Mammary epithelial cell (primary cell): ENCODE measurements at regions of chr1 and their contacts with region 1.

Region 1: GRCh38 chr1:232630047-232630893 is at the start of gene SIPA1L2:
- DNase-seq: peak; percentile 88
- H3K4me3 ChIP-seq: peak within 1 kb of the TSS; percentile 64 to 83 (median 77)
- H3K27ac ChIP-seq: no peak within 1 kb of the TSS
- H3K4me1 ChIP-seq: peaks cover 16% of the 10 kb centered on the region
- H3K27me3 ChIP-seq: no peaks in the 10 kb centered on the region
- CTCF ChIP-seq: peak; percentile 37 to 74
- total RNA-seq, gene SIPA1L2: 3.8 to 19.8 TPM

Region 2: GRCh38 chr1:231757101-231757404 is 873.2 kb before region 1 on chr1:
- CTCF ChIA-PET with region 1: interaction called, 9 read pairs
- dilution Hi-C with region 1: no loop called
- in situ Hi-C with region 1: no loop called
- intact Hi-C with region 1: loop called (anchors 1 kb)
- DNase-seq: no peak
- H3K4me3 ChIP-seq: no peak overlapping the region
- H3K27ac ChIP-seq: no peak overlapping the region
- H3K4me1 ChIP-seq: no peaks in the 10 kb centered on the region
- H3K27me3 ChIP-seq: peaks cover 2% of the 10 kb centered on the region
- CTCF ChIP-seq: no peak

Region 3: GRCh38 chr1:231872461-231872910 is 757.8 kb before region 1 on chr1:
- CTCF ChIA-PET with region 1: interaction called, 7 read pairs
- dilution Hi-C with region 1: no loop called
- in situ Hi-C with region 1: loop called (anchors 5 to 10 kb)
- intact Hi-C with region 1: no loop called
- DNase-seq: no peak
- H3K4me3 ChIP-seq: no peak overlapping the region
- H3K27ac ChIP-seq: no peak overlapping the region
- H3K4me1 ChIP-seq: no peaks in the 10 kb centered on the region
- H3K27me3 ChIP-seq: no peaks in the 10 kb centered on the region
- CTCF ChIP-seq: no peak

Region 4: DNA sequence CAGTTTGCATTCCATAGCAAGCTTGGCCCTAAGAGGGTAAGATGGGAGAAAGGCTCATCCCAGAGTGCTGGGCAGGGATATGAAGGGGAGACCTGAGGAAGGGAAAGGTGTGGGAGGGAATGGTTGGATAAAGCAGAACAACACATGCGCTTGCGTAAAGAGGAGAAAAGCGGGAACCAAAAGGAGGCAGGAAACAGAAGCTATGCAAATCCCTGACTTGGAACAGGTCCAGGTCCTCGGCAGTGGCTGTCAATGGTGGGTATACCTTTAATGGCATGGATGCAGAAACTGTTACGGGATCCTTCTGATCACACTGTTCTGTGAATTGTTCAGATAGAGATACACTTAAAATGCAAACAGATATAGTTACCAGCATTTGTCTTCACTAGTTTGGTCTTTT is 456.0 kb before region 1 on chr1:
- CTCF ChIA-PET with region 1: no interaction called
- dilution Hi-C with region 1: no loop called
- in situ Hi-C with region 1: loop called in 1 of 2 experiments (anchors 10 kb)
- intact Hi-C with region 1: no loop called
- DNase-seq: no peak
- H3K4me3 ChIP-seq: no peak overlapping the region
- H3K27ac ChIP-seq: no peak overlapping the region
- H3K4me1 ChIP-seq: no peaks in the 10 kb centered on the region
- H3K27me3 ChIP-seq: no peaks in the 10 kb centered on the region
- CTCF ChIP-seq: no peak

Region 5: DNA sequence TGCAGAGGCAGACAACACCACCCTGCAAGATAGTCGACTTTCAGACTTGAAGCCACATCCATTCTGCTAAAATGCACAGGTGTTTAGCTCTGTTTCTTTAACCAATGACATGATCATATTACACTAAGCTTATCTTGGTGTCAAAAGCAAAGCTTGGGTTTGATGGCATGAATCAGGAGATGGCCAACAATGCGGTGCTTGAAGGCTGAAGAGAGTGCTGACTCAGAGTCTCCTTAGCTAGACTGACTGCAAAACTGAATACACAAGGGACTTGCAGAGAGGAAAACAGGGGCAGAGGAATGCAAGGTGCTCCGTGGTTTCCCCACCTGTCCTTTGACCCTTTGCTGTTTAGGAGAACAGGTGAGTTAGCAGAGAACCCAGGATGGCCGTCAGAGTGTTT is 263.0 kb before region 1 on chr1:
- CTCF ChIA-PET with region 1: no interaction called
- dilution Hi-C with region 1: no loop called
- in situ Hi-C with region 1: no loop called
- intact Hi-C with region 1: no loop called
- DNase-seq: no peak
- H3K4me3 ChIP-seq: no peak overlapping the region
- H3K27ac ChIP-seq: no peak overlapping the region
- H3K4me1 ChIP-seq: no peaks in the 10 kb centered on the region
- H3K27me3 ChIP-seq: no peaks in the 10 kb centered on the region
- CTCF ChIP-seq: no peak

Region 6: GRCh38 chr1:232528472-232529089 is 101.7 kb before region 1 on chr1:
- CTCF ChIA-PET with region 1: interaction called, 3 read pairs
- dilution Hi-C with region 1: no loop called
- in situ Hi-C with region 1: no loop called
- intact Hi-C with region 1: loop called (anchors 1 kb)
- DNase-seq: no peak
- H3K4me3 ChIP-seq: no peak overlapping the region
- H3K27ac ChIP-seq: no peak overlapping the region
- H3K4me1 ChIP-seq: peaks cover 12% of the 10 kb centered on the region
- H3K27me3 ChIP-seq: no peaks in the 10 kb centered on the region
- CTCF ChIP-seq: no peak

Region 7: GRCh38 chr1:233025157-233025915 is 395.1 kb after region 1 on chr1:
- CTCF ChIA-PET with region 1: no interaction called
- dilution Hi-C with region 1: no loop called
- in situ Hi-C with region 1: no loop called
- intact Hi-C with region 1: loop called (anchors 5 kb)
- DNase-seq: peak; percentile 82
- H3K4me3 ChIP-seq: no peak overlapping the region
- H3K27ac ChIP-seq: no peak overlapping the region
- H3K4me1 ChIP-seq: peaks cover 17% of the 10 kb centered on the region
- H3K27me3 ChIP-seq: no peaks in the 10 kb centered on the region
- CTCF ChIP-seq: peak in 1 of 2 donors; percentile 11